HCT116 (cell line): ENCODE measurements at regions of chr17 and their contacts with region 1.

Region 1: GRCh38 chr17:6279659-6280058 is 155.3 kb downstream of the AIPL1 start:
- DNase-seq: peak; percentile 56
- ATAC-seq: peak; percentile 88
- H3K4me3 ChIP-seq: no peak overlapping the region
- H3K27ac ChIP-seq: no peak overlapping the region
- H3K4me1 ChIP-seq: no peaks in the 10 kb centered on the region
- H3K27me3 ChIP-seq: 0 out of 2 replicates have a peak, but pooled peaks cover 20% of the 10 kb centered on the region
- CTCF ChIP-seq: peak; percentile 60 to 98 (median 69)
- POLR2A ChIP-seq: no peak
- RAD21 ChIP-seq: peak; percentile 88

Region 2: DNA sequence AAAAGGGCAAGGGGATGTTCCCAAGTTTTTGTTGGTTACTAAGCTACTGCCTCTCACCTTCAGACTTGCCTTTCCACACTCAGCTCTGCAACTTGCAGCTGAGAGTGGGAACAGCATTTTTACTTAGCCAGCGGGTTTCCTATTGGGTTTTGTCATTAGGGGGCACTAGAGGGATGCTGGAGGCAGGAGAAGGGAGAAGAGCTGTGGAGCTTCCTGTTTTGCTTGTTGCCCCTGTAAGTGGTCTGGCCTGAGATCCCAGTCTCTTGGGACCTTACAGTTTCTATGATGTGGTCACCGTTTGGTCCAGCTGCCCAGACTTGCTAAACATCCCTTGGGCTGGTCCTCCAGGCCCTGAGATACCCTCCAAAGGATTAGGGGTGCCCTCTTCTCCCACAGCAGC is 485.8 kb before region 1 on chr17:
- CTCF ChIA-PET with region 1: interaction called, 3 read pairs
- POLR2A ChIA-PET with region 1: no interaction called
- RAD21 ChIA-PET with region 1: interaction called in 1 of 2 experiments, 3 read pairs
- intact Hi-C with region 1: loop called (anchors 10 kb)
- DNase-seq: no peak
- ATAC-seq: no peak
- H3K4me3 ChIP-seq: no peak overlapping the region
- H3K27ac ChIP-seq: no peak overlapping the region
- H3K4me1 ChIP-seq: no peaks in the 10 kb centered on the region
- H3K27me3 ChIP-seq: peaks cover 34% of the 10 kb centered on the region; the same call in 1 of the 2 replicates
- CTCF ChIP-seq: peak in 2 of 3 experiments; percentile 38 to 40; a peak in 4 of 6 replicates
- POLR2A ChIP-seq: no peak
- RAD21 ChIP-seq: peak; percentile 67

Region 3: DNA sequence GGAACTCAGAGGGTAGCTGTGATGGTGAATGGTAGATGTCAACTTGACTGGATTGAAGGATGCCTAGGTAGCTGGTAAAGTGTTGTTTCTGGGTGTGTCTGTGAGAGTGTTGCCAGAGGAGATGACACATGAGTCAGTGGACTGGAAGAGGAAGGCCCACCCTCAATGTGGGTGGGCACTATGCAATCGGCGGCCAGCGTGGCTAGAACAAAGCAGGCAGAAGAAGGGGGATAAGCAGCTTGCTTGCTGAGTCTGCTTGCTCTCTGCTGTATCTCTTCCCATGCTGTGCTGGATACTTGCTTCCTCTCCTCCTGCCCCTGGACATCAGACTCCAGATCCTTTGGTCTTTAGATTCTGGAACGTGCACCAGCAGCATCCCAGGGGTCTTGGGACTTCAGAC is 27.2 kb after region 1 on chr17:
- CTCF ChIA-PET with region 1: no interaction called
- POLR2A ChIA-PET with region 1: no interaction called
- RAD21 ChIA-PET with region 1: no interaction called
- intact Hi-C with region 1: no loop called
- DNase-seq: no peak
- ATAC-seq: no peak
- H3K4me3 ChIP-seq: no peak overlapping the region
- H3K27ac ChIP-seq: no peak overlapping the region
- H3K4me1 ChIP-seq: no peaks in the 10 kb centered on the region
- H3K27me3 ChIP-seq: peaks cover 58% of the 10 kb centered on the region
- CTCF ChIP-seq: no peak
- POLR2A ChIP-seq: no peak
- RAD21 ChIP-seq: no peak